HepG2 (cell line): ENCODE measurements at regions of chr3 and their contacts with region 1.

Region 1: DNA sequence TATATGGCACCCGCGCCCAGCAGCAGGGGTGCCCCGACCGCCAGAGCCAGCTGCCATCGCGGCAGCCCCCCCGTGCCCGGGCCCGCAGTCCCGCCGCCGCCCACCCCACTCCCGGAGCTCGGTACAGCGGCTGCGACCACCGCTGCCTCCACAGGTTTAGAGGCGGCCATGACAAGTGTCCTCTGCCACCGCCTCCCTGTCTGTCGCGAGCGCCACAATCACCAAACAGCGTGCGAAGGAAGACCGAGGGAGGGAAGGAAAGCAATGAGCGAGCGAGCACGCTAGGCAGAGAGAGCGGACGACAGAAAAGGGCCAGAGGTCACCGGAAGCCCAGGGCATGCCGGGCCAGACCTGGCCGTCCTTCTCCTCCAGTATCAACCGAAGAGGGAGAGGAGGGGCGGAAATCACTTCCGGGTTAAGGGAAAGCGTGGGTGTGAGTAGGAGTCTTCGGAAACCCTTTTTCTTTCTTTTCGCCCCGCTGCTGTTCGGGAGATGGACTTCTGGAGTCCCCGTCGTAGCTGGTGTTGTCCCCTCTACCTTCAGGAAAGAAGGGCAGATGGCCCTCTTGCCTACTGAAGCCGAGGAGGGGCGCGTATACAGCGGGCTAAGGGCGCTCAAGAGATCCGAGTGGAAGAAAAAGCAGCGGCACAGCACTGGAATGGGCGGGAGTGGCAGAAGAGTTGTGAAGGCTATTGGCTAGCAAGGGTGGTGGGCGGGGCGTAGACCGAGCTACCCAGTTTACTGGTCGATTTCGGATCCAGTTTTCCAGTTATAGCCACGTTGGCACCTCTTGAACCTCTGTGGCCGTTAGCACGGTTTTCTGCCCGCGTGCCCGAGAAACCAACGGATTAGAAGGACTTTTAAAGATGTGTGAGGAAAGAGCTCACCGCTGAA is at the starts of genes LNP1 and TOMM70:
- DNase-seq: peak; percentile 96
- ATAC-seq: peak; percentile 96
- H3K4me3 ChIP-seq: peak within 1 kb of the TSS; percentile 92 to 99 (median 96)
- H3K27ac ChIP-seq: peak within 1 kb of the TSS; percentile 93
- H3K4me1 ChIP-seq: peaks cover 57% of the 10 kb centered on the region
- H3K27me3 ChIP-seq: no peaks in the 10 kb centered on the region; a peak in 1 of 5 replicates
- CTCF ChIP-seq: no peak
- EP300 ChIP-seq: no peak
- POLR2A ChIP-seq: peak; percentile 89 to 98
- RAD21 ChIP-seq: peak; percentile 15; the same call in 1 of the 2 replicates
- total RNA-seq, gene LNP1: 6.0 and 7.0 TPM in 2 replicates
- total RNA-seq, gene TOMM70: 77.2 and 95.2 TPM in 2 replicates

Region 2: GRCh38 chr3:100175637-100176280 is 225.3 kb before region 1 on chr3:
- CTCF ChIA-PET with region 1: no interaction called
- POLR2A ChIA-PET with region 1: no interaction called
- in situ Hi-C with region 1: no loop called
- intact Hi-C with region 1: no loop called
- DNase-seq: no peak
- ATAC-seq: no peak
- H3K4me3 ChIP-seq: no peak overlapping the region
- H3K27ac ChIP-seq: no peak overlapping the region
- H3K4me1 ChIP-seq: no peaks in the 10 kb centered on the region
- H3K27me3 ChIP-seq: no peaks in the 10 kb centered on the region
- CTCF ChIP-seq: no peak
- EP300 ChIP-seq: no peak
- POLR2A ChIP-seq: no peak
- RAD21 ChIP-seq: no peak

Region 3: DNA sequence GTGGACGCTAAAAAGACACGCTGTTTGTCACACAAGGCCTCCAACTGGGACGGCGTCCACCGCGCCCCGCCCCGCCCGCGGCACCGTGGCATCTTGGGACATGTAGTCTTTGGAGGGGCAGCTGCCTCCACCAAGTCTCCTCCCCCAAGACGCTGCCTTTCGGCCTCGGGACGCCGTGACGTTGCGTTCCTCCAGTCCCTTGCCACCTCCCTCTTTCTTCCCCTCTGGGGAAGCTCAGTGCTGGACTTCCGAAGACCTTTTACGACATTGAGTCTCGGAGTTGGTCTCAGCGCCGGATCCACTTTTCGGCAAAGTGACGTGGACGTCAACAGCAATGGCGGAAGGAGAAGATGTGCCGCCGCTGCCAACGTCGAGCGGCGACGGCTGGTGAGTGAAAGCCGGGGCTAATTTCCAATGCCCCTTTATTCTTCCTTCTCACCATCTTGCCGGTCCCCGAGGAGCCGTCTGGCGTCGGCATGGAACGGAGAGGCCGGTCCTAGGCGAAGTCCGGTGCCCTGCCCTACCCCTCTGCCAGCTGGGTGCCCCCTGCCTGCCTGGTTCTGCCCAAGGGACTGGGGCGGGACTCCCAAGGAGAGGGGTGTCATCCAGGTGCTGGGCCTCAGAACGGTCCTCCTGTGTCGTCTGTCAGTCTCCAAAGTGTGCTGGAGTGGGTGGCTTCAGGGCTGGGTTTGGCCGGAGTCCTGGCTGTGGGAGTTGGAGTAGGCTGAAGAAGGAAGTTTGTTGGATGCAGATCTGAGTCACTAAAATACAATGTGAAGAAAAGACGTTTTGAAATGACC is 140.1 kb before region 1 on chr3 and contains the start of gene TBC1D23:
- CTCF ChIA-PET with region 1: no interaction called
- POLR2A ChIA-PET with region 1: interaction called, 10 read pairs
- in situ Hi-C with region 1: no loop called
- intact Hi-C with region 1: no loop called
- DNase-seq: peak; percentile 97
- ATAC-seq: peak; percentile 97
- H3K4me3 ChIP-seq: peak within 1 kb of the TSS; percentile 95 to 98 (median 98)
- H3K27ac ChIP-seq: peak within 1 kb of the TSS; percentile 87
- H3K4me1 ChIP-seq: peaks cover 60% of the 10 kb centered on the region
- H3K27me3 ChIP-seq: no peaks in the 10 kb centered on the region; a peak in 1 of 5 replicates
- CTCF ChIP-seq: peak; percentile 25
- EP300 ChIP-seq: no peak
- POLR2A ChIP-seq: peak; percentile 67 to 79
- RAD21 ChIP-seq: no peak
- total RNA-seq, gene TBC1D23: 28.7 and 44.5 TPM in 2 replicates

Region 4: DNA sequence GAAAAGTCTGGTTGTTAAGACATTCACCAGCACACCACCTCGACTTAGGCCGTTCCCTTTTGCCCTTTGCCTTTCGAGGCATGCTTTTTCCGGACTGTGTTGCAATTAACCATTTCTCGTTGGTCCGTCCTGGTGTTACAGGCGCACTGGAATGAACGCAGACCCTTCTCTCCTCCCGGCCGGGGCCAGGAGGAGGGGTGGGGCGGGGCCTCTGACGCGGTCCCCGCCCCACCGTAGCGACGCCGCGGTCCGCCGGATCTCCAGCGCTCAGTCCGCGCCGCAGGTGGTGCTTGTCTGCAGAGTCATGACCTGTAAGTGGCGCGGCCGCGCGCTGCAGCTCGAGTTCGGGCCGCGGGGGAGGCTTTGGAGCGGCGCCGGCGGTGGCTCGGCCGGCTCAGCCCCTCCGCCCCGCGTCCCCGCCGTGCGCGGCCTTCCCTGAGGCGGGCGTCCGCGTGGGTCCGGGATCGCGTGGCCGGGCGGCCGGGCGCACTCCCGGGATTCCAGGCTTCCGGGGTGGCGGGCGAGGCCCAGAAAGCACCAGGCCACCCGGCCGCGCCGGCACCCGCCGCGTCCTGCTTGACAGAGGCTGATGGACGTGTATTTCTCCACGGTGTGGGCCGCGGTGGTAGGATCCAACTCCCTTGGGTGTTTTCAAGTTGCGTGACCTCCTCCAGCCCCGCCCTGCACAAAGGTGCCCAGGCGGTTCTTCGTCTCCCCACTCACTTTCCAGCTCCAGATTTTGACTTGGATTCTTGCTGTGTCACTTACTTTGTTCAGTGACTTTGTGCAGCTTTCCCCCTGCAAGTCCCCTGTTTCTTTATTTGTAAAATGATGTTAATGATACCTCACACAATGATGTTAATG is 66.3 kb before region 1 on chr3 and contains the start of gene NIT2:
- CTCF ChIA-PET with region 1: no interaction called
- POLR2A ChIA-PET with region 1: interaction called, 29 read pairs
- in situ Hi-C with region 1: no loop called
- intact Hi-C with region 1: loop called (anchors 2 kb)
- DNase-seq: peak; percentile 85
- ATAC-seq: peak; percentile 95
- H3K4me3 ChIP-seq: peak within 1 kb of the TSS; percentile 70 to 82 (median 78)
- H3K27ac ChIP-seq: peak within 1 kb of the TSS; percentile 79
- H3K4me1 ChIP-seq: peaks cover 50% of the 10 kb centered on the region
- H3K27me3 ChIP-seq: no peaks in the 10 kb centered on the region
- CTCF ChIP-seq: 0 out of 2 replicates have a peak, but pooled peaks have one; percentile 17
- EP300 ChIP-seq: peak in 1 of 2 experiments; percentile 57; a peak in 2 of 4 replicates
- POLR2A ChIP-seq: peak; percentile 87 to 95
- RAD21 ChIP-seq: peak; percentile 68
- total RNA-seq, gene NIT2: 49.1 and 54.3 TPM in 2 replicates

Region 5: DNA sequence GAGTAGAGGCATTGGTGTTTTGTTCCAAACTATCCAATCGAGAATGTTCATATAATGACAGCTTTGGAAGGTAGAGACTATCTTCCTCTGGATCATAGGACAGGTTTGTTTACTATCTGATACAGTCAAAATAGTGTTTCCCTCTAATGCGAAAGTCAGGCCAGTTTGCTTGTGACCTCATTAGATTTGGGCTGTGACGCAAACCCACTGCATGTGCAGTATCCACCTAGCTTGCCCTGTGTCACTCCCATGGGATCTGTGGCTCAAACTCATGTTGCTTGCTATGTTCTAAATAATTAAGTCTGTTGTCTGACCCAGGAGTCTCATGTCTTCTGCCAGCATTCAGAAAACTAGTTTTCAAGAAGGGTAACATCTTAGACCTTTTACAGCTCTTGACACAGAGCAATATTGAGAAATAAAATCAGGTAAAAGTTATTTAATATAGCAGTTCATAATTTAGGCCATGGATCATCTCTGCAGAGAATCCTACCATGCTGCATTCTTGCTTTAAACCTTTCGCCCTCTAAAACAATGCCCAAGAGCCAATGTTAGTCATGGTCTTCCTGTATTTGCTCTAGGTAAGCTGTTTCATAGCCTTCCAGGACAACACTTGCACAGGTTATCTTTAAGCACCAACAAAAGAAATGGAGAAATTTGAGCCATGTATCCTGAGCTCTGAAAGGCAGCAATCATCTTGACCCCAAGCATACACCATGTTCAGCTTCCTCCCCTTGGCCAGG is 40.1 kb before region 1 on chr3:
- CTCF ChIA-PET with region 1: no interaction called
- POLR2A ChIA-PET with region 1: interaction called, 12 read pairs
- in situ Hi-C with region 1: no loop called
- intact Hi-C with region 1: no loop called
- DNase-seq: no peak
- ATAC-seq: peak; percentile 9
- H3K4me3 ChIP-seq: no peak overlapping the region
- H3K27ac ChIP-seq: no peak overlapping the region
- H3K4me1 ChIP-seq: peaks cover 25% of the 10 kb centered on the region
- H3K27me3 ChIP-seq: no peaks in the 10 kb centered on the region
- CTCF ChIP-seq: no peak
- EP300 ChIP-seq: no peak
- POLR2A ChIP-seq: no peak
- RAD21 ChIP-seq: no peak

Region 6: GRCh38 chr3:100386437-100387074 is 14.5 kb before region 1 on chr3:
- CTCF ChIA-PET with region 1: no interaction called
- POLR2A ChIA-PET with region 1: interaction called, 39 read pairs
- in situ Hi-C with region 1: no loop called
- intact Hi-C with region 1: no loop called
- DNase-seq: peak; percentile 73
- ATAC-seq: peak; percentile 99
- H3K4me3 ChIP-seq: peak overlapping the region in 1 of 3 experiments; percentile 23; a peak in 3 of 6 replicates
- H3K27ac ChIP-seq: peak overlapping the region; percentile 68
- H3K4me1 ChIP-seq: peaks cover 37% of the 10 kb centered on the region
- H3K27me3 ChIP-seq: no peaks in the 10 kb centered on the region
- CTCF ChIP-seq: no peak
- EP300 ChIP-seq: peak in 1 of 2 experiments; percentile 67; a peak in 2 of 4 replicates
- POLR2A ChIP-seq: no peak
- RAD21 ChIP-seq: no peak

Region 7: DNA sequence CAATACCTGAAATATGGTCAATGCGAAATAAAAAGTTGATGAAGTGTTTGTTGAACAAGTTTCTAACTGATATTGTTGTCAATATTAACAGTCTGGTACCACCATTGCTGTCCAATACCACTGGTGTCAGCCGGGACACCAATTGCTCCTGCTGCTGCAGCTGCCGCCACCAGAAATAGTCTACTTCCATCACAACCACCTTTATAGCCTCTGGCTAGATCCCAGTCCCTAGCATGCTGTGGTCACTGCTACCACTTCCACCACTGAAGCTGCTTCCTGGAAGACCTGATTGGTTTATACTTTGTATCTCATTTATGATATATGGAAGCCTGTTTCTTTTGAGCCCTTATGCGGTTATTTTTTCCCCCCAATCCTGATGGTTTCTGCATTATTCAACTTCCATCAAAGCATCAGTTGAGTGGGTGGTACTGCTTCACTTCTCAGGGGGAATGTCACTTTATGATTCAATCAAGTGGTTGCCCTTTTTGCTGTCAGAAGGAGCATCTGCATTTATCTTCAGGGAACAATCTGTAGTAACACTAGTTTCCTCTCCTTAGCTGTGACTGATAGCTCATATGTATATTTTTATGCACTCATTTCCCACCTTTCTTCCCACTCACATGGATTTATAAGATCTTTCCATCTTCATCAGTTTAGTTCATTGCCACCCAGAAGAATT is 12.0 kb after region 1 on chr3:
- CTCF ChIA-PET with region 1: no interaction called
- POLR2A ChIA-PET with region 1: interaction called, 44 read pairs
- in situ Hi-C with region 1: no loop called
- intact Hi-C with region 1: no loop called
- DNase-seq: no peak
- ATAC-seq: no peak
- H3K4me3 ChIP-seq: no peak overlapping the region
- H3K27ac ChIP-seq: no peak overlapping the region
- H3K4me1 ChIP-seq: peaks cover 49% of the 10 kb centered on the region
- H3K27me3 ChIP-seq: no peaks in the 10 kb centered on the region
- CTCF ChIP-seq: no peak
- EP300 ChIP-seq: no peak
- POLR2A ChIP-seq: no peak
- RAD21 ChIP-seq: no peak

Region 8: DNA sequence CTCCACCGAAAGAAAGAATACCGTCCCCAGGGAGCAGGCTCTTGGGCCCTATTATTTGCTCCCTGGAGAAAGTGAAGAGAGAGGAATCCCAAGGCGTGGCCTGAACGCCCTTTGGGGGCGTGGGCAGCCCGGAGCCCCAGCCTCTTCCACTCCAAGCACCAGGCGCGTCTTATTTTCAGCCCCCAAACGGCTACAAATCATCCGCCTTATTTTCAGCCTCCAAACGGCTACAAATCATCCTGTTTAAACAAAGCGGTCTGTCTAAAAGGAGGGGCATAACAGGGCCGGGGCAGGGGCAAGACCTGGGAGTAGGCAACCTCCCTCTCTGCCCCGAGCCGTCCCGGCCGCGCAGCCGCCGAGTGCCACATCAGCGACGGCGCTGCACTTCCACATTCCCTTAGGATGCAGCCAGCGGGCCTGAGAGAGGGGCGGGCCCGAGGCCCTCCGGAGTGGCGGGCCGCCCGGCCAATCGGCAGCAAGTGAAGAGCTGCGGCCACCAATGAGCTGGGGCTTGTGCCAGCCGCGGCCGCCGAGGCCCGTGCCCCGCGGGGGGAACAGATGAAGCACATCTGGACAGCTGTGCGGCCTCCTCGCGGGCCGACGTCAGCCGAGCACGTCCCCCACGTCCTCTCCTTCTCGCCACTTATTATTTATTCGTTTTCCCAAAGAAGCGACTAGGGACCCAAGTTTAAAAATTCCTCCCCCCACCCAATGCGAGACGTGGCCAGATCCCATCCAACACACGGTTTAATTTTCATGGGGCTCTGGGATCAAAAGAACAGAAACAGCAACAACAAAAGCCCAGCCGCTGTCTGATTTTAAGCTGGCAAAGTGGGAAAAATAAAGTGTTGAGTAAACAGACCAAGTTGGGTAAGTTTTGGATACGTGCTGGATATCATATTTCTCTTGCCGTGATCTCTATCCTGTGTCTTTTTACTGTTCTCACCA is 91.3 kb after region 1 on chr3 and contains the start of gene TMEM45A:
- CTCF ChIA-PET with region 1: no interaction called
- POLR2A ChIA-PET with region 1: interaction called, 12 read pairs
- in situ Hi-C with region 1: no loop called
- intact Hi-C with region 1: no loop called
- DNase-seq: peak; percentile 88
- ATAC-seq: peak; percentile 99
- H3K4me3 ChIP-seq: peak within 1 kb of the TSS; percentile 68 to 79 (median 79)
- H3K27ac ChIP-seq: peak within 1 kb of the TSS; percentile 65
- H3K4me1 ChIP-seq: peaks cover 45% of the 10 kb centered on the region
- H3K27me3 ChIP-seq: peaks cover 0 to 15% of the 10 kb centered on the region in 2 experiments; a peak in 2 of 5 replicates
- CTCF ChIP-seq: peak; percentile 30; the same call in 1 of the 2 replicates
- EP300 ChIP-seq: no peak
- POLR2A ChIP-seq: peak; percentile 76 to 86
- RAD21 ChIP-seq: no peak
- total RNA-seq, gene TMEM45A: 11.7 and 14.8 TPM in 2 replicates